ENCODE measurements at regions of chr3 and their contacts with region 1.

Region 1: DNA sequence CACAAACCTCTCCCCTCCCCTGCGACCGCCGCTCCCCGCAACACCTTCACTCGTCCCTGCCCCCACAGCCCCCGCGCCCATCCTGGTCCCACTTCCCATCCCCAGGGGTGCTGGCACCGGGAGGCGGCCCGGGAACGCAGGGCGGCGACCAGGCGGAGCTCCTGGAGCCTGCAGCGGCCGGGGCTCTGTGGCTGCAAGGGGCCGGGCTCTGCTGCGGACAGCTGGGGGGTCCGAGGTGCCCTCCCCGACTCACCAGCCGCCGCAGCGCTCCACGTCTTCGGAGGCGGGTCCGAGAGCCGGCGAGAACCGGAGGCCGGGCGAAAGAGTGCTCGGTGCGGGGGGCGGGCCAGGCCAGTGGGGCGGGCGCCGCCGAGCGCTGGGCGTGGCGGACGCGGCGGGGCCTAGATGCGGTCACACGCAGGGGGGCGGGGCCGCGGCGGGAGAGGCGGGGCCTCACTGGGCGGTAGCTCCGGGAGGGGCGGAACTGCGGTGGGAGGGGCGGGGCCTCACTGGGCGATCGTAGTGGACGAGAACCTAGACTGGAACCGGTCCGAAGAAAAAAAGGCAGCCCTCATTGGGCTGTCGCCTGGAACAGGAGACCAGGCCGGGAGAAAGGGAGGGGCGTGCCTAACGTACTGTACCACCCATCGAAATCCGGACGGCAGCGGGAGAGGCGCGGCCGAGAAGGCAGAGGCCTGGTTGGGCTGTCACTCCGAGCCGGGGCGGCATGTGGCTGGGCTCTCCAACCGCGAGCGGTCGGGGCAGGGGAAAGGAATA is at the start of gene ANO10:
- DNase-seq: peak; percentile 98 to 100 (median 99)
- ATAC-seq: peak; percentile 94
- H3K4me3 ChIP-seq: peak within 1 kb of the TSS; percentile 89
- H3K27ac ChIP-seq: peak within 1 kb of the TSS; percentile 86
- H3K4me1 ChIP-seq: peaks cover 7 to 20% of the 10 kb centered on the region in 2 experiments; a peak in 4 of 5 replicates
- H3K27me3 ChIP-seq: no peaks in the 10 kb centered on the region
- CTCF ChIP-seq: no peak
- EP300 ChIP-seq: no peak
- POLR2A ChIP-seq: no peak; the same call in 1 of the 2 replicates
- RAD21 ChIP-seq: peak in 1 of 2 experiments; percentile 17; a peak in 1 of 4 replicates
- polyA plus RNA-seq, gene ANO10: 6.4 to 14.2 TPM

Region 2: GRCh38 chr3:43584043-43584826 is 37.6 kb before region 1 on chr3:
- CTCF ChIA-PET with region 1: no interaction called
- POLR2A ChIA-PET with region 1: no interaction called
- in situ Hi-C with region 1: no loop called
- intact Hi-C with region 1: loop called (anchors 5 kb)
- DNase-seq: peak; percentile 35 to 73 (median 38)
- ATAC-seq: peak; percentile 74
- H3K4me3 ChIP-seq: no peak overlapping the region
- H3K27ac ChIP-seq: peak overlapping the region; percentile 77
- H3K4me1 ChIP-seq: peaks cover 15 to 44% of the 10 kb centered on the region in 2 experiments
- H3K27me3 ChIP-seq: no peaks in the 10 kb centered on the region
- CTCF ChIP-seq: peak in 2 of 3 experiments; percentile 28 to 39; a peak in 3 of 6 replicates
- EP300 ChIP-seq: 0 out of 2 replicates have a peak, but pooled peaks have one; percentile 29
- POLR2A ChIP-seq: no peak
- RAD21 ChIP-seq: peak in 1 of 2 experiments; percentile 39; a peak in 2 of 4 replicates

Measured in K562 (cell line).